Aorta (tissue), 5 donors: ENCODE measurements at regions of chr9 and their contacts with region 1.

Region 1: GRCh38 chr9:107465467-107466451 is 23.8 kb downstream of the KLF4 start:
- DNase-seq: peak; percentile 79 to 91
- ATAC-seq: peak; percentile 98
- H3K4me3 ChIP-seq: peak overlapping the region; percentile 1 to 47
- H3K27ac ChIP-seq: no peak overlapping the region
- H3K4me1 ChIP-seq: no peaks in the 10 kb centered on the region
- H3K27me3 ChIP-seq: no peaks in the 10 kb centered on the region

Region 2: DNA sequence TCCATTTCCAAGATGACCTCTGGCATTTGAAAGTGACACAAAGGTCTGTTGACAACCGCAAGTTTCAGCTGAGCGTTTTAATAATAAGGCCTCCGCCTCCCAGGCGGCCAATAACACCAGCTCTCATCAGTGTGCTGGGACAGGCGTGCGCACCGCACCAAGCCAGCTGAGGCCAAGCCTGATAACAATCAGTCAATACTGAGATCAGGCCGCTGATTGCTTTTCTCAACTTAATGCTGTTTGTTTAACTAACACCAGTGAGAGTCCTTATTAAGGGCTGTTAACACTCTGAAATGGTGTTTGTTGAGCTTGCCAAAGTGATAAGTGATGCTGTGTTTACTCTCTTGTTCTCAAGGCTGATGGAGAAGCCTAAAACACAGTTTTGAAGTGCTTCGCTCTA is 354.0 kb after region 1 on chr9:
- intact Hi-C with region 1: no loop called
- DNase-seq: no peak
- ATAC-seq: no peak
- H3K4me3 ChIP-seq: no peak overlapping the region
- H3K27ac ChIP-seq: no peak overlapping the region
- H3K4me1 ChIP-seq: no peaks in the 10 kb centered on the region
- H3K27me3 ChIP-seq: no peaks in the 10 kb centered on the region

Region 3: GRCh38 chr9:108761655-108762347 is 1296.0 kb after region 1 on chr9:
- intact Hi-C with region 1: loop called (anchors 5 to 10 kb)
- DNase-seq: peak; percentile 57 to 80
- ATAC-seq: peak; percentile 85
- H3K4me3 ChIP-seq: no peak overlapping the region
- H3K27ac ChIP-seq: no peak overlapping the region
- H3K4me1 ChIP-seq: no peaks in the 10 kb centered on the region
- H3K27me3 ChIP-seq: no peaks in the 10 kb centered on the region